ENCODE measurements at regions of chr13 and their contacts with region 1.

Region 1: GRCh38 chr13:46288570-46289259 is 77.0 kb downstream of the LRRC63 start:
- DNase-seq: peak in 4 of 5 donors; percentile 67 to 71 (median 69)
- H3K4me3 ChIP-seq: no peak overlapping the region
- H3K4me3 Mint-ChIP-seq: no peak overlapping the region
- H3K27ac ChIP-seq: no peak overlapping the region
- H3K27ac Mint-ChIP-seq: peak overlapping the region in 3 of 7 donors; percentile 26 to 53 (median 42)
- H3K4me1 ChIP-seq: peaks cover 7% of the 10 kb centered on the region
- H3K4me1 Mint-ChIP-seq: peaks cover 3 to 22% (median 8%) of the 10 kb centered on the region in 4 donors
- H3K27me3 ChIP-seq: no peaks in the 10 kb centered on the region
- H3K27me3 Mint-ChIP-seq: no peaks in the 10 kb centered on the region

Region 2: DNA sequence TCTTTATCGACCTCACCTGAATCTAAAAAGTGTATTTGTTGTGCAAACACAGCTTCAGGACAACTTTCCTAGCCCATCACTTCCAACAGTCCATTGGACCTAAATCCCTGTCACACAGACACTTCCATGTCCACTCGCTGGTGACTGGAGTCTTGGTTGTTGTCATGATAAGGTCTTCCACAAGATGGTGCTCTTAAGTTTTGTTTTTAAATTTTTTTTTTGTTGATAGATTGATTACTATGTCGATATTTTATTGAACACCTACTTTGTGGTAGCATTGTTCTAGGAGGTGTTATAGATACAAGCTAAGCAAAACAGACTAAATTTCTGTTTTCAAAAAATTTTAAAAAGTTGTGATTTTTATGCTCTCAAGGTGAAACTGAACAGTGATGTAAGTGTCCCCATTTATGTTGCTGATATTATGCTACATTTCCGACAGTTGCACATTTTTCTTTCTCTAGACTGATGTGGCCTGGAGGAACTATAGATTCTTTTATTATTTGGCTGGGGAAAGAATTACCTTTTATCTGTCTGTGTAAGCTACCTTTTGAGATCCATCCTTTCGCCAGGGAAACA is 665.1 kb before region 1 on chr13:
- CTCF ChIA-PET with region 1: no interaction called
- POLR2A ChIA-PET with region 1: no interaction called
- intact Hi-C with region 1: loop called (anchors 1 kb)
- DNase-seq: peak in 4 of 5 donors; percentile 11 to 31 (median 22)
- H3K4me3 ChIP-seq: no peak overlapping the region
- H3K4me3 Mint-ChIP-seq: no peak overlapping the region
- H3K27ac ChIP-seq: no peak overlapping the region
- H3K27ac Mint-ChIP-seq: no peak overlapping the region
- H3K4me1 ChIP-seq: peaks cover 5% of the 10 kb centered on the region
- H3K4me1 Mint-ChIP-seq: peaks cover 0 to 1% (median under 1%) of the 10 kb centered on the region in 4 donors
- H3K27me3 ChIP-seq: peaks cover 6% of the 10 kb centered on the region
- H3K27me3 Mint-ChIP-seq: peaks cover 24 to 39% of the 10 kb centered on the region in 2 donors

Region 3: GRCh38 chr13:46006688-46007452 is 281.8 kb before region 1 on chr13:
- CTCF ChIA-PET with region 1: no interaction called
- POLR2A ChIA-PET with region 1: no interaction called
- intact Hi-C with region 1: no loop called
- DNase-seq: no peak
- H3K4me3 ChIP-seq: no peak overlapping the region
- H3K4me3 Mint-ChIP-seq: no peak overlapping the region
- H3K27ac ChIP-seq: no peak overlapping the region
- H3K27ac Mint-ChIP-seq: peak overlapping the region in 1 of 7 donors; percentile 37
- H3K4me1 ChIP-seq: no peaks in the 10 kb centered on the region
- H3K4me1 Mint-ChIP-seq: peaks cover 0 to 4% (median under 1%) of the 10 kb centered on the region in 4 donors
- H3K27me3 ChIP-seq: no peaks in the 10 kb centered on the region
- H3K27me3 Mint-ChIP-seq: no peaks in the 10 kb centered on the region

Region 4: DNA sequence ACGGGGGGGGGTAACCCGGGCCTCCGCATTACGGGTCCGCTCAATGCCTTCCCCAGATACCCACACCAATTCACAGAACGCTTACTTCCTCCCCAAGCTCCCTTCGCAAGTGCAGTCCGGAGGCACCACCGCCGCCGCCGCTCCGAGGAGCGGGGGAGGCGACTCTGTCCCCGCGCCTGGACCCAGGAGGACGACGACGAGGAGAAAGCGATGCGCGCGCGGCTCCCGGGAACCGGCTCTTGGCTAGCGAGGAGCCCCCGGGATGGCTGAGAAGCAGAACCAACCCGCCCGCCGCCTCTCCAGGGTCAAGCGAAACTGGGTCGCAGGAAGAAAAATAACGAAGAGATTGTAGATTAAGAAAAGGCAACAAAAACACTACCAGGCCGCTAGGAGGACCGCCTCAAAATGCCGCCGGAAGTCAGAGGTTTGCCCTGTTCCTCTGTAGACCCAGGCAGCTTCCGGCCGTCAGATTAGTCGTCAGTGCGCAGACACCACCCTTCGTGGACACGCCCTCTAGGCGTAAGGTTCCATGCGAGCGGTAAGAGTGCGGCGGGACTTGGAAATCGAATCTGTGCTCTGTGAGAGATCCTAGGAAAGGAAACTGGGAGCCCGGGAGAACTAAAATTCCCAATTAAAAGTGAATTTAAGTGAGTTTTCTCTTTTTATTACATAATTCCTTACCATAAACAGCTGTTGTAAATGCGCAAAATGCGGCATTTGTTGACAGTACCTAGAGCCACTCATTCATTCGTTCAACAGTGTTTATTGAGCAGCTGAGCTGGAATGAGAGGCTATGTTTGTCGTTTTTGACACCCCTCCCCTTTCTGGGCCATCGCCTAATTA is 236.2 kb before region 1 on chr13 and contains the start of gene ZC3H13:
- CTCF ChIA-PET with region 1: no interaction called
- POLR2A ChIA-PET with region 1: no interaction called
- intact Hi-C with region 1: loop called (anchors 2 kb)
- DNase-seq: peak; percentile 91 to 97 (median 93)
- H3K4me3 ChIP-seq: peak within 1 kb of the TSS; percentile 59 to 88
- H3K4me3 Mint-ChIP-seq: peak within 1 kb of the TSS; percentile 88 to 99 (median 95)
- H3K27ac ChIP-seq: peak within 1 kb of the TSS; percentile 95
- H3K27ac Mint-ChIP-seq: peak within 1 kb of the TSS; percentile 93 to 99 (median 98)
- H3K4me1 ChIP-seq: peaks cover 38% of the 10 kb centered on the region
- H3K4me1 Mint-ChIP-seq: peaks cover 28 to 49% (median 37%) of the 10 kb centered on the region in 4 donors
- H3K27me3 ChIP-seq: peaks cover 4% of the 10 kb centered on the region
- H3K27me3 Mint-ChIP-seq: peaks cover 7 to 14% of the 10 kb centered on the region in 2 donors
- total RNA-seq, gene ZC3H13: 55.1 to 65.5 TPM

Region 5: GRCh38 chr13:46160471-46161066 is 128.1 kb before region 1 on chr13:
- CTCF ChIA-PET with region 1: interaction called, 46 read pairs
- POLR2A ChIA-PET with region 1: interaction called, 13 read pairs
- intact Hi-C with region 1: loop called (anchors 1 kb)
- DNase-seq: peak; percentile 54 to 77 (median 73)
- H3K4me3 ChIP-seq: peak overlapping the region; percentile 2 to 23
- H3K4me3 Mint-ChIP-seq: peak overlapping the region; percentile 12 to 87 (median 82)
- H3K27ac ChIP-seq: peak overlapping the region; percentile 73
- H3K27ac Mint-ChIP-seq: peak overlapping the region; percentile 84 to 96 (median 94)
- H3K4me1 ChIP-seq: peaks cover 54% of the 10 kb centered on the region
- H3K4me1 Mint-ChIP-seq: peaks cover 44 to 59% (median 51%) of the 10 kb centered on the region in 4 donors
- H3K27me3 ChIP-seq: no peaks in the 10 kb centered on the region
- H3K27me3 Mint-ChIP-seq: no peaks in the 10 kb centered on the region